ENCODE measurements at regions of chr10 and their contacts with region 1.

Region 1: GRCh38 chr10:127853868-127854768 is 38.6 kb downstream of the CLRN3 start:
- DNase-seq: peak; percentile 49 to 73 (median 61)
- H3K4me3 ChIP-seq: peak overlapping the region in 2 of 7 experiments; percentile 42 to 51
- H3K27ac ChIP-seq: no peak overlapping the region
- H3K4me1 ChIP-seq: peaks cover 0 to 4% (median 1%) of the 10 kb centered on the region in 4 experiments
- H3K27me3 ChIP-seq: peaks cover 0 to 4% (median 0%) of the 10 kb centered on the region in 5 experiments

Region 2: DNA sequence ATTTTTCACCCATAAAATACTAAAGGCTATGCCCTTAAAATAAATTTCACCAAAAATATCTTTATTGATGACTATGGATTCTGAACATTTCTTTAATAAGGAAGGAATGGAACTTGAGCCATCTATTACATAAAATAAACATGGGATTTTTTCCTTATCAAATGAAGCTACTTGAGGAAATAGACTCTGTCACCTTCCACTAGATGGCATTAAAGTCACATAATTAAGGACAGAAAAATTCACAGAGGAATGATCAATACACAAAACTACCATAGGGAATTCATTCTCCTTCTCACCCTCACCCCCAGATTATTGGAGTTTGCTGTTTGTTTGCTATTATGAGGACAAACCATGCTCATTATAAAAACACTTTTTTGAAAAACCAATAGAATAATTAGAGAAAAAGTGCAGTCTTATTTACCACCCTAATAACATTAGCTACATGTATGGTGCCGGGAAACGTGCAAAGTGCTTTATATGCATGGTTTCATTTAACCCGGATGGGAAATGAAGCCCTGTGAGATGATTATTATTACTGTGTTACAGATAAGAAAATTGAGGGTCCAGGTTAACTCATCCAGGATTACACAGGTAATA is 138.2 kb before region 1 on chr10:
- CTCF ChIA-PET with region 1: interaction called, 29 read pairs
- POLR2A ChIA-PET with region 1: no interaction called
- DNase-seq: peak; percentile 55 to 64 (median 56)
- H3K4me3 ChIP-seq: no peak overlapping the region
- H3K27ac ChIP-seq: no peak overlapping the region
- H3K4me1 ChIP-seq: no peaks in the 10 kb centered on the region
- H3K27me3 ChIP-seq: no peaks in the 10 kb centered on the region